Right ventricle myocardium inferior (tissue), 1 donor: ENCODE measurements at regions of chr11 and their contacts with region 1.

Region 1: GRCh38 chr11:102384419-102385079 is 37.5 kb downstream of the BIRC2 start:
- DNase-seq: peak; percentile 77
- ATAC-seq: peak; percentile 89

Region 2: DNA sequence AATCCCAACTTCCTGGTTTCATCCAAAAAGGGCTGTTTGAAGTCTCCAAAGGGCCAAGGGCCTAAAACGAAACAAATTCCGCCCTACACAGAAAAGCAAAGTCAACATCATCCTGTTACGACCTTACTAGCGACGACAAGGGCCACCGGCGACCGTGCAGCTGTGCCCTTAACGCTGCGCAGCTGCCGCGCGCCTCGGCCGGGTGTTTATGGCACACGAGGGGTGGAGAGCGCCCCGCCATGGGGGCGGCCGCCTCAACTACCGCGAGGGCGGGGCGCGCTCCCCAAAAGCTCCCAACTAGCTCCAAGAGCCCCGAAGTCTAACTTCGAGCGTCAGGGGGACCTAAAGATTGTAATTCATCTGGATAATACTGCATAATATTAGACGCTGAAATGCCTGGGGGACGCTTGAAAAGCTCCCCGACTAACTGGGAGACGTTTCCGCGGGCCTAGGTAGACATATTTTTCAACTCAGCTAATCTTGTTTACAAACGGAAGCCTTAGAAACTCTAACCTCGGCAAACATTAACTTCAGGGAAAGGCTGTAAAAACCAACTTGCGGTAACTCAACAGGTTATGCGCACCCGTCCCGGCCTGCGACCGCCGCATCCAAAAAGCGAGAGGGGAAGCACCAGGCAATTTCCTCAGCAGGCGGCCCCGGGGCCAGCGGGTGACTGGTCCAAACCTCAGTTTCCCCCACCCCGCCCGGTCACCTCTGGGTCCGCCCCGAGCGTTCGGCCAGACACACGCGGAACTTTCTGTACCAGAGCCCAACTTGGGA is 67.3 kb after region 1 on chr11:
- intact Hi-C with region 1: loop called (anchors 5 kb)
- DNase-seq: peak; percentile 88
- ATAC-seq: peak; percentile 82

Region 3: GRCh38 chr11:102534261-102534872 is 149.8 kb after region 1 on chr11:
- intact Hi-C with region 1: no loop called
- DNase-seq: no peak
- ATAC-seq: no peak